Ovary (tissue), 10 donors: ENCODE measurements at regions of chr17 and their contacts with region 1.

Region 1: DNA sequence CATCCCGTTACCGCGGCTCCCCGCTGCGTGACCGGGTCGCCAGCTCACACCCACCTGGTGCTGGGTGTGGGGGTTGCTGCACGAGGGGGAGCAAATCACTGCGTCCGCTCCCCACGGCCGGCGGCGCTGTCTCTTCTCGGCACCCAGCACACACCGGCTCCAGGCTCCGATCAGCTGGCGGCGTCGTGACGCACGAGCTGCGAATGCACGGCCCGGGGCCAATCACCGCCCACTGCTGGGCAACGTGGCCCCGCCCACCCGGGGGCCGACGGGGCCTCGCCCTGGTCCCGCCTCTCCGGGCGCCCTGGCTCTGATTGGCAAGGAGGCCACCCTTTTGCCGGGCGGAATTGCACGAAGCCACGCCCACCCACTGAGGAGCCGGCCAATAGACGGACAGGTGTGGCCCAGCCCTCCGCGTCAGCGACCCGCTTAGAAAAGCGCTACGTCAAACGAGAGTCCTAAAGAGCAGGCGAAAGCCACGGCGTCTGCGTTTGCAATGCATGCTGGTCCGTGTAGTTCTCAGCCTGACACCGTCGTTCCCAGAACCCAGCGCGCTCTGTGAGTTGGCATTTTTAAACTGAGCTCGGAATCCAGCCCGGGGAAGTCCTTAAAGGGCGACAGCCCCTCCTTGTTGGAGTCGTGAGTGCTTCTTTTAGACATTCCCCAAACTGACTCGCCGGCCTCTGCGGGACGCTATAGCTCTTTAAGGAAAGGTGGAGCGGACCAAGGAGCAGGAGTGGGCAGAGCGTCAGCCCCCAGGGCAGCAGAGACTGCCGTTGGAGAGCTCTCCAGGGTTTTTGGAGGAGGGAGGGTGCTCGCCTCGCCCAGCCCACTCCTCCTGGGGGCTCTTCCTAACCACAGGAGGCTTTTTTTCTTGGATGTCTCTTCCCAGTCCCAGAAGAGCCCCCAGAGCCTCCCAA is 6.2 kb upstream of the TLCD2 start:
- DNase-seq: peak; percentile 100
- H3K4me3 ChIP-seq: peak overlapping the region; percentile 73
- H3K27ac ChIP-seq: peak overlapping the region; percentile 96 to 100
- H3K4me1 ChIP-seq: peaks cover 18% of the 10 kb centered on the region
- H3K27me3 ChIP-seq: no peaks in the 10 kb centered on the region
- CTCF ChIP-seq: peak in 1 of 3 donors; percentile 19
- EP300 ChIP-seq: peak; percentile 65
- POLR2A ChIP-seq: peak; percentile 100

Region 2: DNA sequence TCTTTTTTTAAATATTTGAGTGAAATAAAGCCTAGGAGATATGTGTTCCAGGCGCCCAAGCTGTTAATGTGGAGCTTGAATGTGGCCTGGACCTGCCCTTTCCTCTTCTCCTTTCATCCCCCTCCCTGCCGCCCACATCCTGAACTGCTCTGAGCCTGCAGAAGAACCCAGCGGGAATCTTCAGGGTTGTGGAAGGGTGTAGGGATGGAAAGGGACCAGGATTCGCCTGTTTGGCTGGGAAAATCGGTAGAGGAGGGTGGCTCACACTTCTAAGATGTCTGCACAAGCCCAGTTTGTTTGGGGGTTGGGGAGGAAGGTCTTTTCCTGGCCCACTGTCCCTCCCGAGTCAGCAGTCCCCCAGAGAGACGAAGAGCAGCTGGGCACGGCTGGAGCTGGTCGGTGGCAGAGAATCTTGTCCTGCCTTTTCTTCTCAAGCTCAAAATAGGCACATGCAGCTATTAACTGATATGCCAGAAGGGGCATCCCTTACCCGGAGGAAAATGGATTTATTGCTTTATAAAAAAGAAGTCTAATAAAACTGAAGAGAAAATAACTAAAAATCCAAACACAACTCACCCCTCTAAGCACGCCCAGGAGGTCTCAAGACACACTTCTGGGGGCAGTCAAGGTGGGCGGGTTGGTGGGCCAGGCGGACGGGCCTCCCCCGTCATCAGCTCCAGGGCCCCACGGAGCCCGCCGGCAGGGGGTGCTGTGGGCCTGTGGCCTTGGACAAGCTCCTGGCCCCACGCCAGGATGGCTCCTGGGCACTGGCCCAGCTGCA is 142.2 kb before region 1 on chr17:
- intact Hi-C with region 1: loop called in 1 of 4 experiments (anchors 10 kb)
- DNase-seq: peak; percentile 84 to 95 (median 94)
- H3K4me3 ChIP-seq: no peak overlapping the region
- H3K27ac ChIP-seq: peak overlapping the region; percentile 54 to 76
- H3K4me1 ChIP-seq: peaks cover 19% of the 10 kb centered on the region
- H3K27me3 ChIP-seq: no peaks in the 10 kb centered on the region
- CTCF ChIP-seq: peak; percentile 92 to 99 (median 97)
- EP300 ChIP-seq: no peak
- POLR2A ChIP-seq: no peak

Region 3: GRCh38 chr17:1673041-1673785 is 43.1 kb before region 1 on chr17:
- intact Hi-C with region 1: loop called in 1 of 4 experiments (anchors 5 kb)
- DNase-seq: no peak
- H3K4me3 ChIP-seq: no peak overlapping the region
- H3K27ac ChIP-seq: no peak overlapping the region
- H3K4me1 ChIP-seq: no peaks in the 10 kb centered on the region
- H3K27me3 ChIP-seq: no peaks in the 10 kb centered on the region
- CTCF ChIP-seq: no peak
- EP300 ChIP-seq: no peak
- POLR2A ChIP-seq: no peak

Region 4: GRCh38 chr17:1783834-1784611 is 67.7 kb after region 1 on chr17:
- intact Hi-C with region 1: loop called (anchors 2 to 5 kb)
- DNase-seq: peak; percentile 81 to 94 (median 84)
- H3K4me3 ChIP-seq: peak overlapping the region; percentile 14
- H3K27ac ChIP-seq: peak overlapping the region; percentile 92 to 94
- H3K4me1 ChIP-seq: peaks cover 29% of the 10 kb centered on the region
- H3K27me3 ChIP-seq: no peaks in the 10 kb centered on the region
- CTCF ChIP-seq: peak; percentile 81 to 97 (median 97)
- EP300 ChIP-seq: peak; percentile 93
- POLR2A ChIP-seq: peak; percentile 68

Region 5: DNA sequence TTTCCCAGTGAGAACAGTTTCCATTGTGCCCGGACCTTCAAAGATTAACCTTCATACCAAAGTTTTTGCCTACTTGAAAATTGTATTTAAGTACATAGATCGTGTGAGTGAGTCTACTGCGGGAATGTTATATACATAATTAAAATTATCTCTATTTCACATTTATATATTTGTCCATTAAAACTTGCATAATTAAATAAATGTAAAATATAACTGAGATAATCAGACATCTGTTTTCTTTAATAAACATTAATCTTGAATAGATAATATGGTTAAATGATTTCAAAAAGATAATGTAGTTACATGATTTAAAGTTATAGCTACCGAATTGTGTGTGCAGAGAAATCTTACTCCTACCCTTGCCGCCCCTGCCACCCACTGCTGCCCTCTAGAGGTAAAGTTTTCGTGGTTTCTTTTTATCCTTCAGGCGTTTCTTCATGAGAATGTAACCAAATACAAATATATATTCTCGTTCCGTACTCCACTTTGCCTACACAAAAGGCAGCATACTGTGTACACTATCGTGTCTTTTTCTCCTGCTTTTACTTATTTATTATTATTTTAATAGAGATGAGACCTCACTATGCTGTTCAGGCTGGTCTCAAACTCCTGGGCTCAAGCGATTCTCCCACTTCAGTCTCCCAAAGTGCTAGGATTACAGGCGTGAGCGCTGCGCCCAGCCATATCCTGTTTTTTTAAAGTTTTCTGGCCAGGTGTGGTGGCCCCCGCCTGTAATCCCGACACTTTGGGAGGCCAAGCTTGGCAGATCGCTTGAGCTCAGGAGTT is 149.1 kb after region 1 on chr17:
- intact Hi-C with region 1: loop called in 1 of 4 experiments (anchors 10 kb)
- DNase-seq: no peak
- H3K4me3 ChIP-seq: no peak overlapping the region
- H3K27ac ChIP-seq: no peak overlapping the region
- H3K4me1 ChIP-seq: peaks cover 6% of the 10 kb centered on the region
- H3K27me3 ChIP-seq: no peaks in the 10 kb centered on the region
- CTCF ChIP-seq: no peak
- EP300 ChIP-seq: no peak
- POLR2A ChIP-seq: no peak

Region 6: GRCh38 chr17:2029911-2030778 is 313.8 kb after region 1 on chr17 and contains the start of gene DPH1:
- intact Hi-C with region 1: loop called in 1 of 4 experiments (anchors 5 kb)
- DNase-seq: peak; percentile 85 to 92 (median 90)
- H3K4me3 ChIP-seq: peak within 1 kb of the TSS; percentile 97
- H3K27ac ChIP-seq: peak within 1 kb of the TSS in 1 of 2 donors; percentile 6
- H3K4me1 ChIP-seq: peaks cover 5% of the 10 kb centered on the region
- H3K27me3 ChIP-seq: no peaks in the 10 kb centered on the region
- CTCF ChIP-seq: peak in 2 of 3 donors; percentile 19 to 24
- EP300 ChIP-seq: no peak
- POLR2A ChIP-seq: peak; percentile 45
- total RNA-seq, gene DPH1: 42.4 to 77.7 (median 46.0) TPM